T-cell (primary cell): ENCODE measurements at regions of chr6 and their contacts with region 1.

Region 1: DNA sequence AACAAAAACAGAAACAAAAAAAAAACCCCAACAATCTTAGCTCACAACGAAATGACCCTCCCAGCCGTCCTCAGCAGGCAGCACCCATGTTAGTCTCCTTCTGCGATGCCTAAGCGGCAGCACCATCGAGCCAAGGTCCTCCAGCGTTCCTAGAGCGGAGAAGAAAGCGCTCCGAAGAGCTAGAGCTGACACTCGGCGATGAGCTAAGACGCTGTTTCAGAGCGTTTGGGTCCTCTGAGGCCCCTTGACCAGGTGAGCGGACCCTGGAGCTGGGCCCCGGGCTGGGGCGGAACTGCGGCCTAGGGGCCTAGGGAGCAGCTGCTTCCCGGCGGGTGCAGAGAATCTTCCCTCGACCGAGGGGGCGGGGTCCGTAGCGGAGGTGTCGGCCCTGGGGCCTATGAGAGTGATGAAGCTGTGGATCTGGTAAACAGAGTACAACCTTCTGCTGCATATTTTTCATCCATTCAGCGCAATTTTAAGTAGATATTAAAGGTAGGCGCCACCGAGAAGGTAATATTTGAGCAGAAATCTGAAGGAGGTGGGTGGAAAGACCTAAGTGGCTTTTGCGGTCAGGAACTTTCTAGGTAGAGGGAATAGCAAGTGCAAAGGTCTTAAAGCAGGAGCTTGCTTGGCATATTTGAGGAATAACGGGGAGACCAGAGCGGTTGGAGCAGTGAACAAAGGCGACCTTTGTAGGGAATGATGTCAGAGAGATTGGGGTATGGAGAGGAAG is at the start of gene ZSCAN26:
- DNase-seq: peak; percentile 71 to 93 (median 86)
- ATAC-seq: peak; percentile 94 to 97 (median 96)
- H3K4me3 ChIP-seq: peak within 1 kb of the TSS; percentile 87 to 97
- H3K4me3 Mint-ChIP-seq: no peak within 1 kb of the TSS
- H3K27ac ChIP-seq: peak within 1 kb of the TSS; percentile 80
- H3K27ac Mint-ChIP-seq: peak within 1 kb of the TSS in 1 of 2 donors; percentile 62
- H3K4me1 ChIP-seq: peaks cover 8 to 14% of the 10 kb centered on the region in 2 experiments
- H3K4me1 Mint-ChIP-seq: peaks cover 8 to 31% (median 28%) of the 10 kb centered on the region in 3 donors
- H3K27me3 ChIP-seq: no peaks in the 10 kb centered on the region
- H3K27me3 Mint-ChIP-seq: no peaks in the 10 kb centered on the region
- total RNA-seq, gene ZSCAN26: 9.0 to 20.4 (median 19.2) TPM

Region 2: GRCh38 chr6:28252009-28252975 is 14.8 kb before region 1 on chr6 and contains the start of gene ZKSCAN4:
- CTCF ChIA-PET with region 1: interaction called in 1 of 2 experiments, 19 read pairs
- POLR2A ChIA-PET with region 1: interaction called, 7 to 17 read pairs
- DNase-seq: peak; percentile 57 to 90 (median 76)
- ATAC-seq: peak; percentile 88 to 92 (median 92)
- H3K4me3 ChIP-seq: peak within 1 kb of the TSS; percentile 63 to 96
- H3K4me3 Mint-ChIP-seq: peak within 1 kb of the TSS; percentile 94 to 99 (median 98)
- H3K27ac ChIP-seq: peak within 1 kb of the TSS; percentile 32
- H3K27ac Mint-ChIP-seq: peak within 1 kb of the TSS; percentile 87 to 92
- H3K4me1 ChIP-seq: peaks cover 9 to 22% of the 10 kb centered on the region in 2 experiments
- H3K4me1 Mint-ChIP-seq: peaks cover 38 to 47% (median 41%) of the 10 kb centered on the region in 3 donors
- H3K27me3 ChIP-seq: peaks cover 0 to 6% of the 10 kb centered on the region in 2 experiments
- H3K27me3 Mint-ChIP-seq: peaks cover 0 to 5% of the 10 kb centered on the region in 2 donors
- total RNA-seq, gene ZKSCAN4: 2.9 to 12.4 (median 10.1) TPM

Region 3: GRCh38 chr6:28335564-28336283 is 68.6 kb after region 1 on chr6 and contains the start of gene ZSCAN31:
- CTCF ChIA-PET with region 1: interaction called in 1 of 2 experiments, 5 read pairs
- POLR2A ChIA-PET with region 1: interaction called in 1 of 2 experiments, 11 read pairs
- DNase-seq: peak; percentile 55 to 90 (median 78)
- ATAC-seq: peak; percentile 89 to 93 (median 91)
- H3K4me3 ChIP-seq: peak within 1 kb of the TSS; percentile 75 to 93
- H3K4me3 Mint-ChIP-seq: peak within 1 kb of the TSS in 1 of 3 donors; percentile 9
- H3K27ac ChIP-seq: peak within 1 kb of the TSS; percentile 97
- H3K27ac Mint-ChIP-seq: no peak within 1 kb of the TSS
- H3K4me1 ChIP-seq: peaks cover 6 to 13% of the 10 kb centered on the region in 2 experiments
- H3K4me1 Mint-ChIP-seq: peaks cover 3 to 7% (median 6%) of the 10 kb centered on the region in 3 donors
- H3K27me3 ChIP-seq: no peaks in the 10 kb centered on the region
- H3K27me3 Mint-ChIP-seq: no peaks in the 10 kb centered on the region
- total RNA-seq, gene ZSCAN31: 0.79 to 1.5 (median 1.1) TPM

Region 4: DNA sequence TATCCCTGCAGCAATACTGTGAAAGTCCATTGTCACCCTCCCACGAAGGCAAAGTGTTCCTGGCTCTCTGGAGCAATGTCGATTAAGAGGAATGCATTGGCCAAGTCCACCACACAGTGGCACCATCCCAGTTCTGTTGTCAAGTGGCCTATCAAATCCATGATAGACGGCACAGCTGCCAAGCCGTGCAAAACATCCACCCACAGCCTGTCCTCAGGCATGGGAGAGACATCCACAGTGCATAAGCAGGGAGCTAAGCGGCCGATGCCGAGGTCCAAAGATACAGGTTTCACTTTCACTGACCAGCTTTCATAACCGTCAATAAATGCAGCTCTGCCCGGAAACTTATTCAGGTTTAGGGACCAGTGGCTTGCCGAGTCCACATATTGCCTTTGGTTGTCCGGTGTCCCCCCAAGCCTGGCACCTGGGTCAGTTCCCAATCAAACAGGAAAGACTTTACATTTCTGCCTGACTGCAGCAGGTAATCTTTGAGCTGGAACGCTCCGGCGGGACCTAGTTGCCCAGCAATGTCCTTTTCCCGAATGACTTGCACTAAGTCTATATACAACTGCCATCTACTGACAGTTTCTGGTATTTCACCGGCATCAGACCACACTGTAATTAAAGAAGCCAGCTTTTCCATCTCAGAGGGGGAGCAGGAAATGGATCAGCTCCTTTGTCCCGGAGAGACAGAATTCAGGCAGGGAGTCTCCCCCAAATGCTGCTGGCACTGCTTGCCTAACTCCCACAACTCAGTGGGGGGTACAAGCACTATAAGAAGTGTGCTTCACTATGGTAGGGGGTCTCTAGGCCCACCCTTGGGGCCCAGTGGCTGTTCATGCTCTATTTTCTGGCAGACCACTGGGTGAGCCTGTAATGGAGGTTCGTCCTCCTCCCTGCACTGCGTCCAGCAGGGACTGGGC is 88.9 kb after region 1 on chr6:
- CTCF ChIA-PET with region 1: interaction called, 3 to 19 read pairs
- POLR2A ChIA-PET with region 1: interaction called in 1 of 2 experiments, 8 read pairs
- DNase-seq: peak in 34 of 35 experiments; percentile 14 to 83 (median 44)
- ATAC-seq: peak; percentile 78 to 86 (median 81)
- H3K4me3 ChIP-seq: peak overlapping the region; percentile 60 to 74
- H3K4me3 Mint-ChIP-seq: peak overlapping the region; percentile 85 to 91 (median 88)
- H3K27ac ChIP-seq: peak overlapping the region; percentile 39
- H3K27ac Mint-ChIP-seq: peak overlapping the region; percentile 71 to 83
- H3K4me1 ChIP-seq: peaks cover 6 to 23% of the 10 kb centered on the region in 2 experiments
- H3K4me1 Mint-ChIP-seq: peaks cover 33 to 37% (median 37%) of the 10 kb centered on the region in 3 donors
- H3K27me3 ChIP-seq: no peaks in the 10 kb centered on the region
- H3K27me3 Mint-ChIP-seq: no peaks in the 10 kb centered on the region

Region 5: GRCh38 chr6:28449056-28449455 is 181.9 kb after region 1 on chr6:
- CTCF ChIA-PET with region 1: interaction called in 1 of 2 experiments, 14 read pairs
- POLR2A ChIA-PET with region 1: no interaction called
- DNase-seq: peak in 11 of 35 experiments; percentile 6 to 63 (median 22)
- ATAC-seq: peak; percentile 54 to 98 (median 80)
- H3K4me3 ChIP-seq: no peak overlapping the region
- H3K4me3 Mint-ChIP-seq: peak overlapping the region in 1 of 3 donors; percentile 39
- H3K27ac ChIP-seq: no peak overlapping the region
- H3K27ac Mint-ChIP-seq: peak overlapping the region in 1 of 2 donors; percentile 69
- H3K4me1 ChIP-seq: peaks cover 7 to 19% of the 10 kb centered on the region in 2 experiments
- H3K4me1 Mint-ChIP-seq: peaks cover 18 to 22% (median 19%) of the 10 kb centered on the region in 3 donors
- H3K27me3 ChIP-seq: peaks cover 2 to 18% of the 10 kb centered on the region in 2 experiments
- H3K27me3 Mint-ChIP-seq: peaks cover 15 to 36% of the 10 kb centered on the region in 2 donors